ENCODE measurements at regions of chr15 and their contacts with region 1.

Region 1: GRCh38 chr15:72722071-72722696 is 36.2 kb downstream of the BBS4 start:
- DNase-seq: peak; percentile 34
- ATAC-seq: peak; percentile 79
- H3K4me3 ChIP-seq: no peak overlapping the region
- H3K27ac ChIP-seq: no peak overlapping the region
- H3K4me1 ChIP-seq: no peaks in the 10 kb centered on the region
- H3K27me3 ChIP-seq: no peaks in the 10 kb centered on the region
- CTCF ChIP-seq: peak; percentile 72 to 87 (median 82); a peak in 5 of 6 replicates
- EP300 ChIP-seq: no peak
- POLR2A ChIP-seq: no peak
- RAD21 ChIP-seq: peak; percentile 87

Region 2: DNA sequence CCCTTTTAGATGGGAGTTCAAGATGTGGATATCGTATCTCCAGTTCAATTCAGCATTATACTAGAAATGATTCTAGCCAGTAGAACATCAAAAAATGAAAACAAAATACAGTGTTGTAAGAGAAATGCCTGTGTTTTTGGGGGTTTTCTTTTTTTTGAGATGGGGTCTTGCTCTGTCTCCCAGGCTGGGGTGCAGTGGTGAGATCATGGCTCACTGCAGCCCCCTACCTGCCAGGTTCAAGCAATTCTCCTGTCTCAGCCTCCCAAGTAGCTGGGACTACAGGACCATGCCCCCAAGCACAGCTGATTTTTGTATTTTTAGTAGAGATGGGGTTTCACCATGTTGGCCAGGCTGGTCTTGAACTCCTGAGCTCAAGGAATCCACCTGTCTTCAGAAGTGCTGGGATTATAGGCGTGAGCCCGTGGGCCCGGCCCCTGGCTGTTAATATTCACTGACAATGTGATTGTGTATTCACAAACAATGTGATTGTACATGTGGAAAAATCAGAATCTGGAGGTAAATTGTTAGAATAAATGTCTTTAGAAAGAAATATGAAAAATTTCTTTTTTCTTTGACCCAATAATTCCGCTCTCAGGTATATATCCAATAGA is 189.1 kb before region 1 on chr15:
- CTCF ChIA-PET with region 1: no interaction called
- POLR2A ChIA-PET with region 1: no interaction called
- RAD21 ChIA-PET with region 1: no interaction called
- SMC1A ChIA-PET with region 1: no interaction called
- in situ Hi-C with region 1: no loop called
- intact Hi-C with region 1: no loop called
- DNase-seq: no peak
- ATAC-seq: peak; percentile 74
- H3K4me3 ChIP-seq: no peak overlapping the region
- H3K27ac ChIP-seq: no peak overlapping the region
- H3K4me1 ChIP-seq: no peaks in the 10 kb centered on the region
- H3K27me3 ChIP-seq: no peaks in the 10 kb centered on the region
- CTCF ChIP-seq: peak; percentile 20 to 44 (median 40); a peak in 4 of 6 replicates
- EP300 ChIP-seq: no peak
- POLR2A ChIP-seq: no peak
- RAD21 ChIP-seq: peak; percentile 29; the same call in 1 of the 2 replicates

Region 3: DNA sequence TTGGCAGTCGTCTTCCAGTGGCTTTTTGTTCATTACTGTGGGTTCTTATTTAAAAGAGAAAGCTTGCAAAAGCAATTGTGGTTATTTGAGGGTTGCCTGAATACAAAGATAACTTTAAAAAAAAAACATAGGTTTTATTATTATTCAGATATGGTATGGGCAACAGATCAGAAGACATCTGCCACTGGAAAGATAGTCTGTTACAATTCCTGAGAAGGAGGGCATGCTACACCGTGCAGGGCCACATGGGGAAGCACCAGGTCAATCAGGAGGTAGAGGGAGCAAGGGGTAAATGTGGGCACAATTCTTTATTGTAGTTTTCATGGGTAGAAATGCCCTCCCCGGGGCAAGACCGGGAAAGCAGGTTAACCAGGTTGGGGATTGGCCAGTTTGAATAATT is 10.3 kb after region 1 on chr15:
- CTCF ChIA-PET with region 1: interaction called, 46 read pairs
- POLR2A ChIA-PET with region 1: no interaction called
- RAD21 ChIA-PET with region 1: interaction called, 3 read pairs
- SMC1A ChIA-PET with region 1: interaction called, 18 read pairs
- in situ Hi-C with region 1: no loop called
- intact Hi-C with region 1: no loop called
- DNase-seq: no peak
- ATAC-seq: 0 out of 3 replicates have a peak, but pooled peaks have one; percentile 41
- H3K4me3 ChIP-seq: no peak overlapping the region
- H3K27ac ChIP-seq: no peak overlapping the region
- H3K4me1 ChIP-seq: no peaks in the 10 kb centered on the region; the same call in 1 of the 2 replicates
- H3K27me3 ChIP-seq: no peaks in the 10 kb centered on the region
- CTCF ChIP-seq: peak in 1 of 3 experiments; percentile 14; a peak in 1 of 6 replicates
- EP300 ChIP-seq: no peak
- POLR2A ChIP-seq: no peak
- RAD21 ChIP-seq: 0 out of 2 replicates have a peak, but pooled peaks have one; percentile 3

Region 4: DNA sequence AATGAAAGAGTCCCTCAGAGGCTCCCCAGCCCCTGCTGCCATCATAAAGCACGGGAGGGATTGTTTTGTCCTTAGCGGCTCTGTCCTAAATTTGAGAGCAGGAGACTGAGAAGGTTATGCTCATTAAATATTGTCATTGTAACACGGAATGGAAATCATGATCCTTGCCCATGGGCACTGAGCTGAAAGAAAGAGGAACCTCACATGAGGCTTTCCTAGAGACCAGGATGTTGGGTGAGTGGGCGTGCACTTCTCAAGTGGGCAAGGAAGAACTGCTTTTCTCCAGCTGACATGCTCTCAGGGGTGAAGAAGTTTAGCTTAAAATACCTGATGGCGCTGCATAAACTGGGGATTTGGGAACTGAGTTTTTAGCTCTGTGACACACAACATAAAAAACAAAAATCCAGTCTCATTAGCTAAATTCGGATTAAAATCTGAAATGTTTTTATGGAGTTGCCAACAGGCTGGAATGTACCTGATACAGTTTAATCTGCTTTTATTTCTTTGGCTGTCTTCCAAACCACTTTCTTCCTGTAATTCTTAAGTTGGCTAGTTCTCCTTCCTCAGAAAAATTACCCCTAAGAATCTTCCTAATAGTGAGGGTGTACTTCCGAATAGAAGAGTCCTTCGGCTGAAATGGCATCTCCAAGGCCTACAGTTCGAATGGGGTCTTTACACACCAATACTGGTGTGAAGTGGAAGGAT is 29.7 kb after region 1 on chr15:
- CTCF ChIA-PET with region 1: interaction called, 31 read pairs
- POLR2A ChIA-PET with region 1: no interaction called
- RAD21 ChIA-PET with region 1: interaction called, 4 read pairs
- SMC1A ChIA-PET with region 1: interaction called, 22 read pairs
- in situ Hi-C with region 1: no loop called
- intact Hi-C with region 1: no loop called
- DNase-seq: no peak
- ATAC-seq: no peak
- H3K4me3 ChIP-seq: no peak overlapping the region
- H3K27ac ChIP-seq: no peak overlapping the region
- H3K4me1 ChIP-seq: no peaks in the 10 kb centered on the region
- H3K27me3 ChIP-seq: no peaks in the 10 kb centered on the region
- CTCF ChIP-seq: no peak
- EP300 ChIP-seq: no peak
- POLR2A ChIP-seq: no peak; the same call in 1 of the 2 replicates
- RAD21 ChIP-seq: no peak

Region 5: GRCh38 chr15:72783563-72784237 is 61.5 kb after region 1 on chr15 and contains the start of gene ADPGK:
- CTCF ChIA-PET with region 1: interaction called, 34 read pairs
- POLR2A ChIA-PET with region 1: no interaction called
- RAD21 ChIA-PET with region 1: interaction called, 10 read pairs
- SMC1A ChIA-PET with region 1: interaction called, 14 read pairs
- in situ Hi-C with region 1: no loop called
- intact Hi-C with region 1: loop called (anchors 5 kb)
- DNase-seq: peak; percentile 70
- ATAC-seq: peak; percentile 86
- H3K4me3 ChIP-seq: peak within 1 kb of the TSS; percentile 94
- H3K27ac ChIP-seq: peak within 1 kb of the TSS; percentile 93
- H3K4me1 ChIP-seq: peaks cover 31% of the 10 kb centered on the region
- H3K27me3 ChIP-seq: no peaks in the 10 kb centered on the region
- CTCF ChIP-seq: 0 out of 6 replicates have a peak, but pooled peaks of 1 of the 3 experiments have one; percentile 0
- EP300 ChIP-seq: peak in 1 of 2 experiments; percentile 34; a peak in 1 of 4 replicates
- POLR2A ChIP-seq: peak; percentile 98
- RAD21 ChIP-seq: no peak
- polyA plus RNA-seq, gene ADPGK: 13.8 to 18.1 TPM

Region 6: DNA sequence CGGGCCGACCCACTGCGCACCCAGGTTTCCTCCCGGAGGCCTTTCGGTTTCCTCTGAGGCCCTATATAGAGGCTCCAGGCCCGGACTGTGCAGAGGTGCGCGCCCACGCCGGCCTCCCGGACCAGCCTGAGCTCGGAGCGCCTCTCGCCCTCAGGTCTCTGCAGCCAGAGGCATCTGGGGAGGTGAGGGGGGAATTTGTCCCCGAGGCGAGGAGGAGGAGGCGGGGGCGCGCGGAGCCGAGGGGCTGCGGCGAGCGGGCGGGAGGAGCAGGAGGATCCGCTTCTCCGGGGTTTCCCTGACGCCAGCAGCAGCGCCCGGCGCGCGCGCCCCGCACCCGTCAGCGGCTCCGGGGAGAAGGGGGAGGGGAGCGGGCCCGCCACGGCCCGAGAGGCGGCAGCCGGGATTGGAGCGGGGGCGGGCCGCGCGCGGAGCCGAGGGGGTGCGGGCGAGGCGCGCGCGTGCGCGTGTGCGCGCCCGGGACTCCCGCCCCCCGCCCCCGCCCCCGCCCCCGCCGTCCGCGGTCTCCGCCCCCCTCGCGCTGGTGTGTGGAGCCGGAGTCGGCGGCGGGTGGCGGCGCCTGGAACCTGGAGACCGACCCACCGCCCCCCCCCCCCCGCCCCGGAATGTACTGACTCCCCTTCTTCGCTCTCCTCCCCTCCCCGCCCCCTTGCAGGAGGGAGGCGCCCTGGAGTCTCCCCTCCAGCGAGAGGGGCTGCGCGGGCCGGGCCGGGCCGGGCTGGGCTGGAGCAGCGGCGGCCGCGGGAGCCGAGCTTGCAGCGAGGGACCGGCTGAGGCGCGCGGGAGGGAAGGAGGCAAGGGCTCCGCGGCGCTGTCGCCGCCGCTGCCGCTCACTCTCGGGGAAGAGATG is 329.9 kb after region 1 on chr15 and contains the start of gene NEO1:
- CTCF ChIA-PET with region 1: interaction called, 5 read pairs
- POLR2A ChIA-PET with region 1: no interaction called
- RAD21 ChIA-PET with region 1: no interaction called
- SMC1A ChIA-PET with region 1: no interaction called
- in situ Hi-C with region 1: no loop called
- intact Hi-C with region 1: loop called (anchors 10 kb)
- DNase-seq: no peak
- ATAC-seq: peak; percentile 89
- H3K4me3 ChIP-seq: peak within 1 kb of the TSS; percentile 78
- H3K27ac ChIP-seq: no peak within 1 kb of the TSS
- H3K4me1 ChIP-seq: no peaks in the 10 kb centered on the region
- H3K27me3 ChIP-seq: peaks cover 0 to 10% of the 10 kb centered on the region in 2 experiments; a peak in 1 of 4 replicates
- CTCF ChIP-seq: no peak
- EP300 ChIP-seq: no peak
- POLR2A ChIP-seq: peak; percentile 68
- RAD21 ChIP-seq: no peak
- polyA plus RNA-seq, gene NEO1: 0.13 to 0.19 TPM

Region 7: DNA sequence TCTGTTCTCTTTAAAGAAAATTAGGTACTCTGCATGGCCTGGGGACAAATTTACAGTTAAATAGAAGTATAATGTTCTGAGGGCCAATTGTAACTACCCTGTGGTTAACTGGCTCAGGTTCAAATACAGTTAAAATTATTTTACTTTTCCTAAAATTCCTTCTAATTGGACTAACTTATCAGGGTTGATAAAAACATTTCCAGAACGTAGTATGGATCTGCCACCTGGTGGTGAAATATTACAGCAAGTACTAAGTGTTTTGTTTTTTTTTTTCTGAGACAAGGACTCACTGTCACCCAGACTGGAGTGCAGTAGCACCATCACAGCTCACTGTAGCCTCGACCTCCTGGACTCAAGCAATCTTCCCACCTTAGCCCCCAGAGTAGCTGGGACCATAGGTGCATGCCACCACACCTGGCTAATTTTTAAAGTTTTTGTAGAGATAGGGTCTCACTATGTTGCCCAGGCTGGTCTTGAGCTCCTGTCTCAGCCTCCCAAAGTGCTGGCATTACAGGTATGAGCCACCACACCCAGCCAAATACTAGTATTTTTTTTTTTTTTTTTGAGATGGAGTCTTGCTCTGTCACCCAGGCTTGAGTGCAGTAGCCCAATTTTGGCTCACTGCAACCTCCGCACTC is 359.3 kb after region 1 on chr15:
- CTCF ChIA-PET with region 1: interaction called, 45 read pairs
- POLR2A ChIA-PET with region 1: no interaction called
- RAD21 ChIA-PET with region 1: interaction called, 19 read pairs
- SMC1A ChIA-PET with region 1: interaction called, 28 read pairs
- in situ Hi-C with region 1: loop called (anchors 5 kb)
- intact Hi-C with region 1: loop called (anchors 1 kb)
- DNase-seq: no peak
- ATAC-seq: peak; percentile 50; the same call in 1 of the 3 replicates
- H3K4me3 ChIP-seq: no peak overlapping the region
- H3K27ac ChIP-seq: no peak overlapping the region
- H3K4me1 ChIP-seq: no peaks in the 10 kb centered on the region
- H3K27me3 ChIP-seq: no peaks in the 10 kb centered on the region
- CTCF ChIP-seq: peak; percentile 33 to 54 (median 38); a peak in 5 of 6 replicates
- EP300 ChIP-seq: no peak
- POLR2A ChIP-seq: no peak
- RAD21 ChIP-seq: peak; percentile 75